Natural killer cell (primary cell): ENCODE measurements at regions of chr1 and their contacts with region 1.

Region 1: DNA sequence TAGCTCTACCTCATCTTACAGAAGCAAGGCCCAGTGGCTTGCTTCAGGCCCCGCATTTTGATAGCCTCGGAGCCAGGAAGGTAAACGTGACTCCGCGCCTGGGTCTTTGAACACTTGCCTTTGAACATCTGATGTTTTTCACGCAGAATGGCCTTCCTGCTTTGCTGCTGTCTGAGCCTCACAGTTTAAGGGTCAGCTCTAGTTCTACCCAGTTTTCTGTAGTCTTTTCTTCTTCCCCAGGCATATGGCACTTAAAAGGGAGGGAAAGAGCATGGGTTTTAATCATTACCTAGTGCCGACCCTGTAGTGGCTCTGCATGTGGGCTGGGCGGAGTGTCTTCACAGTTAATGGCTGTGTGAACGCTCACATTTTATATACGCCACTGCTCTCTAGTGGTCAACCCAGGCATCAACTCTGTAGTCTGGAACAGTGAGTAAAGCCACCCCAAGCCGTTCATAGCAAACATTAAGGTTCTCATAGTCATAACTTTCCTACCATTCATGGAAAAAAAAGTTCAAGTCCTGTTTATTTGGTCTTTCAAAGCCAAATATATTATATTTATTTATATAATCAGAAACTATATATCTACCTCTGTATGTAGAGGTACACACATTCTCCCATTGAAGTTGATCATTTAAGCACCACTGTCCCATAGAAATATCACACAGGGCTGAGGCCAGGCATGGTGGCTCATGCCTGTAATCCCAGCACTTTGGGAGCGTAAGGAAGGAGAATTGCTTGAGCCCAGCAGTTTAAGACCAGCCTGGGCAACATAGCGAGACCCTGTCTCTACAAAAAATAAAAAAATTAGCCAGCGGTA is 78.1 kb downstream of the IER5 start:
- DNase-seq: peak; percentile 57 to 89
- ATAC-seq: peak; percentile 94 to 100 (median 99)
- H3K4me3 ChIP-seq: no peak overlapping the region
- H3K4me3 Mint-ChIP-seq: no peak overlapping the region
- H3K27ac ChIP-seq: no peak overlapping the region
- H3K27ac Mint-ChIP-seq: no peak overlapping the region
- H3K4me1 ChIP-seq: peaks cover 6% of the 10 kb centered on the region
- H3K4me1 Mint-ChIP-seq: peaks cover 6 to 7% of the 10 kb centered on the region in 2 donors
- H3K27me3 ChIP-seq: no peaks in the 10 kb centered on the region
- H3K27me3 Mint-ChIP-seq: no peaks in the 10 kb centered on the region
- CTCF ChIP-seq: peak; percentile 82

Region 2: GRCh38 chr1:180515864-180516388 is 650.7 kb before region 1 on chr1:
- intact Hi-C with region 1: loop called (anchors 1 kb)
- DNase-seq: peak; percentile 23 to 83
- ATAC-seq: peak; percentile 88 to 98 (median 91)
- H3K4me3 ChIP-seq: no peak overlapping the region
- H3K4me3 Mint-ChIP-seq: no peak overlapping the region
- H3K27ac ChIP-seq: no peak overlapping the region
- H3K27ac Mint-ChIP-seq: no peak overlapping the region
- H3K4me1 ChIP-seq: no peaks in the 10 kb centered on the region
- H3K4me1 Mint-ChIP-seq: no peaks in the 10 kb centered on the region
- H3K27me3 ChIP-seq: no peaks in the 10 kb centered on the region
- H3K27me3 Mint-ChIP-seq: peaks cover 14 to 19% of the 10 kb centered on the region in 2 donors
- CTCF ChIP-seq: peak; percentile 87

Region 3: GRCh38 chr1:180881806-180882509 is 284.6 kb before region 1 on chr1:
- intact Hi-C with region 1: loop called (anchors 1 kb)
- DNase-seq: peak in 1 of 2 donors; percentile 28
- ATAC-seq: peak in 1 of 3 donors; percentile 34
- H3K4me3 ChIP-seq: no peak overlapping the region
- H3K4me3 Mint-ChIP-seq: no peak overlapping the region
- H3K27ac ChIP-seq: no peak overlapping the region
- H3K27ac Mint-ChIP-seq: peak overlapping the region in 1 of 2 donors; percentile 1
- H3K4me1 ChIP-seq: no peaks in the 10 kb centered on the region
- H3K4me1 Mint-ChIP-seq: no peaks in the 10 kb centered on the region
- H3K27me3 ChIP-seq: no peaks in the 10 kb centered on the region
- H3K27me3 Mint-ChIP-seq: no peaks in the 10 kb centered on the region
- CTCF ChIP-seq: peak; percentile 14

Region 4: GRCh38 chr1:181033799-181034451 is 132.7 kb before region 1 on chr1 and contains the start of gene MR1:
- intact Hi-C with region 1: loop called (anchors 1 kb)
- DNase-seq: peak in 1 of 2 donors; percentile 91
- ATAC-seq: peak; percentile 95 to 98 (median 97)
- H3K4me3 ChIP-seq: peak within 1 kb of the TSS; percentile 85
- H3K4me3 Mint-ChIP-seq: peak within 1 kb of the TSS; percentile 98
- H3K27ac ChIP-seq: peak within 1 kb of the TSS; percentile 96
- H3K27ac Mint-ChIP-seq: peak within 1 kb of the TSS; percentile 98 to 100
- H3K4me1 ChIP-seq: peaks cover 29% of the 10 kb centered on the region
- H3K4me1 Mint-ChIP-seq: peaks cover 60 to 66% of the 10 kb centered on the region in 2 donors
- H3K27me3 ChIP-seq: no peaks in the 10 kb centered on the region
- H3K27me3 Mint-ChIP-seq: no peaks in the 10 kb centered on the region
- CTCF ChIP-seq: no peak
- total RNA-seq, gene MR1: 27.8 to 35.3 (median 34.6) TPM

Region 5: GRCh38 chr1:181073638-181074037 is 92.9 kb before region 1 on chr1:
- intact Hi-C with region 1: no loop called
- DNase-seq: no peak
- ATAC-seq: no peak
- H3K4me3 ChIP-seq: no peak overlapping the region
- H3K4me3 Mint-ChIP-seq: no peak overlapping the region
- H3K27ac ChIP-seq: no peak overlapping the region
- H3K27ac Mint-ChIP-seq: no peak overlapping the region
- H3K4me1 ChIP-seq: no peaks in the 10 kb centered on the region
- H3K4me1 Mint-ChIP-seq: no peaks in the 10 kb centered on the region
- H3K27me3 ChIP-seq: no peaks in the 10 kb centered on the region
- H3K27me3 Mint-ChIP-seq: peaks cover 14 to 35% of the 10 kb centered on the region in 2 donors
- CTCF ChIP-seq: no peak